Activated naive CD4-positive, alpha-beta T cell treated with anti-CD3 and anti-CD28 coated beads for 36 hours (primary cell): ENCODE measurements at regions of chr9 and their contacts with region 1.

Region 1: GRCh38 chr9:96418074-96418809 is at the start of gene ZNF367:
- DNase-seq: peak; percentile 94
- H3K4me3 Mint-ChIP-seq: peak within 1 kb of the TSS; percentile 84
- H3K27ac Mint-ChIP-seq: peak within 1 kb of the TSS; percentile 91
- H3K4me1 Mint-ChIP-seq: peaks cover 40% of the 10 kb centered on the region
- H3K27me3 Mint-ChIP-seq: no peaks in the 10 kb centered on the region
- total RNA-seq, gene ZNF367: 35.8 to 36.1 TPM

Region 2: DNA sequence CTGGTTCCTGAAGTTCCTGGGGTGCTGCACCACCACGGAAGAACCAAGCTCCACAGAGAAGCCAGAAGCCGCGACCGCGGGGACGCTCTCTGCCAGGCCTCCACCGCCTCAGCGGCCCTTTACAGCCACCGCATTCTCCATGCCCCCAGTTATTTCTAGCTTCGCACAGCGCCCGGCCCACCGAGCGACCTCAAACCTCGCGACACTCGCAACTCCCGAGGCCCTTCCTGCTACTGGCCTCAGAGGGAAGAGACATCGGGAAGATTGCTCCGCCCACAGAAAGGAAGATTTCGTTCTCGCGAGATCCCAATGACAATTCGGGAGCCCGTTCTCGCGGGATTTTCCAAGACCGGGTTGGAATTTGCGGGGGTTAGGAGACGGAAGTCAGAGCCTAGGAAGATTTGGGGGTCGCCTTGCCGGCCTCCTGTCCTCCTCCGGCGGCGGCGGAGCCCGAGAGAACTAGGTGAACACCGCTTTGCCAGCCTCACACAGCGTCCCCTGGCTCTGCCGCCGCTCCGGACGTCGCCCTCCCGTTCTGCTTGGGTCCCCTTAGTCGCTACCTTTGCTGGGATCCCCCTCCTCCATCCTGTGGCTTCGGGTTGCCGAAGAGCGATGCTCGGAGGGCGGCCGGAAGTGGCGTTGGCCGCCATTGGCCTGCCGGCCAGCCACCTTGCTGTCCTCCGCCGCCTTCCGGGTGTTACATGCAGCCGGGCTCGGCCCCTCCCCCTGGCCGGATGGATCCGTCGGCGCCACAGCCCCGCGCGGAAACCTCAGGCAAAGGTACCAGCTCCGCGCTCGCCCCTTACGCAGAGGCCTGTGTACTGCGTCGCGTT is 542.7 kb before region 1 on chr9 and contains the start of gene ERCC6L2:
- CTCF ChIA-PET with region 1: no interaction called
- intact Hi-C with region 1: loop called (anchors 1 kb)
- DNase-seq: peak; percentile 96
- H3K4me3 Mint-ChIP-seq: no peak within 1 kb of the TSS
- H3K27ac Mint-ChIP-seq: no peak within 1 kb of the TSS
- H3K4me1 Mint-ChIP-seq: peaks cover 24% of the 10 kb centered on the region
- H3K27me3 Mint-ChIP-seq: no peaks in the 10 kb centered on the region
- total RNA-seq, gene ERCC6L2: 20.3 to 20.6 TPM

Region 3: GRCh38 chr9:95907794-95908193 is 510.4 kb before region 1 on chr9:
- CTCF ChIA-PET with region 1: no interaction called
- intact Hi-C with region 1: no loop called
- DNase-seq: no peak
- H3K4me3 Mint-ChIP-seq: no peak overlapping the region
- H3K27ac Mint-ChIP-seq: no peak overlapping the region
- H3K4me1 Mint-ChIP-seq: peaks cover 23% of the 10 kb centered on the region
- H3K27me3 Mint-ChIP-seq: no peaks in the 10 kb centered on the region

Region 4: DNA sequence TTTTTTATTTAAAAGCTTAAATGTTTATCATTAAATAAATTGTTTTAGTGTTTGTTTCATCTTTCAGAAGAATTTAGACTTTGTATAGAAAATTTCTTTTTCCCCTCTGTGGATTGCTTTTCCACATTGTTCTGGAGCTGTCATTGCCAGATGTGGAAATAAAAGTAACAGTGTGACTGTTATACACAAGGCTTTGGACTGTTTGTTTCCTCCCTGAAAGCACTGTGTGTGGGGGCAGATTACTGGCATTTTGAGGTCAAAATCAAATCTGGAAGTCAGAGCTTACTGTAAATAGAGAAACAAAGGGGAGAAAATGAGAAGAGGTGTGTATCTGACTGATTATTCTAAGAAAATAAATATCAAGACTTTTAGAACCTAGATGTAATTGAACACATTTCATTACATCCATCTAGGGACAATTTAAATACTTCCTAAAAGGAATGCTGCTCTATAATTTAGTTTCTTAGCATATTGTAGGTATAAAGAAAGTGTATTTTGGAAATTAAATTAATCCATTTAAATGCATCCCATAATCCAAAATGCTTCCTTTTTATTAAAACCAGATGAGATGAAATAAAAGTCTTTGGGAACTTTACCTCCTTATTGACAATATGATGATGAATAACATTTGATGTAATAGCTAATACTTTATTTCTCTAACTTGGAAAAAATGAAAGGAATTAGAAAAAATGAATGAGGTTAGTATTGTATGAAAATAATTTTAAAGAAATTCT is 490.8 kb before region 1 on chr9:
- CTCF ChIA-PET with region 1: no interaction called
- intact Hi-C with region 1: no loop called
- DNase-seq: peak; percentile 5
- H3K4me3 Mint-ChIP-seq: no peak overlapping the region
- H3K27ac Mint-ChIP-seq: no peak overlapping the region
- H3K4me1 Mint-ChIP-seq: peaks cover 2% of the 10 kb centered on the region
- H3K27me3 Mint-ChIP-seq: no peaks in the 10 kb centered on the region

Region 5: GRCh38 chr9:96327694-96328352 is 90.4 kb before region 1 on chr9:
- CTCF ChIA-PET with region 1: interaction called, 4 read pairs
- intact Hi-C with region 1: loop called (anchors 5 kb)
- DNase-seq: peak; percentile 70
- H3K4me3 Mint-ChIP-seq: no peak overlapping the region
- H3K27ac Mint-ChIP-seq: no peak overlapping the region
- H3K4me1 Mint-ChIP-seq: no peaks in the 10 kb centered on the region
- H3K27me3 Mint-ChIP-seq: no peaks in the 10 kb centered on the region

Region 6: DNA sequence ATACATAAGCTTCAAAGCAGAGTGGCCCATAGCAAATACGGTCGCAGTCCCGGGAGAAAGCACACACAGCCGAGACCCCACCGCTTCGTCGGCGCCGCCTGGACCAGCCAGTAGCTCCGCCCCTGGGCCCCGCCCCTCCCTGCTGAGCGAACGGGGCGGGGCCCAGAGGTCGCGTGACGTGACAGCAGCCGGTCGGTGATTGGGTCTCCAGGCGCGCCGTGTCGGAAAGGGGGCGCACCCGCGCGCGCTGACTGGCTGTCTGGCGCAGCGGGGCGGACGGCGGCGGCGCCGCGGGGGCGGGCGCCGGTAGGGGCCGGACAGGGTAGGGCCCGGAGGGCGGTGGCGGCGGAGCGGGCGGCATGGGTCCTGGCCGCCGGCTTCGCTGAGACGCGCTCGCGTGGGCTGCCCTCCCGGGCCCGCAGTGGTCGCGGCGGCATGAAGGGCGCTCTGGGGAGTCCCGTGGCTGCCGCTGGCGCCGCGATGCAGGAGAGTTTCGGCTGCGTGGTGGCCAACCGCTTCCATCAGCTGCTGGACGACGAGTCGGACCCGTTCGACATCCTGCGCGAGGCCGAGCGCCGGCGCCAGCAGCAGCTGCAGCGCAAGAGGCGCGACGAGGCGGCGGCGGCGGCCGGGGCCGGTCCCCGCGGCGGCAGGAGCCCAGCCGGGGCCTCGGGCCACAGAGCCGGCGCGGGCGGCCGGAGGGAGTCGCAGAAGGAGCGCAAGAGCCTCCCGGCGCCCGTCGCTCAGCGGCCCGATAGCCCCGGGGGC is 31.8 kb after region 1 on chr9 and contains the start of gene HABP4:
- CTCF ChIA-PET with region 1: interaction called, 4 read pairs
- intact Hi-C with region 1: loop called (anchors 1 kb)
- DNase-seq: peak; percentile 95
- H3K4me3 Mint-ChIP-seq: peak within 1 kb of the TSS; percentile 85
- H3K27ac Mint-ChIP-seq: peak within 1 kb of the TSS; percentile 66
- H3K4me1 Mint-ChIP-seq: peaks cover 29% of the 10 kb centered on the region
- H3K27me3 Mint-ChIP-seq: peaks cover 4% of the 10 kb centered on the region
- total RNA-seq, gene HABP4: 7.3 to 7.9 TPM

Region 7: GRCh38 chr9:96566498-96567207 is 148.4 kb after region 1 on chr9:
- CTCF ChIA-PET with region 1: no interaction called
- intact Hi-C with region 1: loop called (anchors 1 kb)
- DNase-seq: peak; percentile 76
- H3K4me3 Mint-ChIP-seq: peak overlapping the region; percentile 72
- H3K27ac Mint-ChIP-seq: no peak overlapping the region
- H3K4me1 Mint-ChIP-seq: peaks cover 23% of the 10 kb centered on the region
- H3K27me3 Mint-ChIP-seq: no peaks in the 10 kb centered on the region

Region 8: GRCh38 chr9:96777426-96777864 is 359.2 kb after region 1 on chr9:
- CTCF ChIA-PET with region 1: no interaction called
- intact Hi-C with region 1: loop called (anchors 10 kb)
- DNase-seq: no peak
- H3K4me3 Mint-ChIP-seq: peak overlapping the region; percentile 100
- H3K27ac Mint-ChIP-seq: peak overlapping the region; percentile 96
- H3K4me1 Mint-ChIP-seq: peaks cover 32% of the 10 kb centered on the region
- H3K27me3 Mint-ChIP-seq: no peaks in the 10 kb centered on the region